AG04449 (cell line): ENCODE measurements at regions of chr17 and their contacts with region 1.

Region 1: GRCh38 chr17:44899069-44899782 is at the start of gene EFTUD2:
- DNase-seq: no peak
- H3K4me3 ChIP-seq: peak within 1 kb of the TSS; percentile 100
- CTCF ChIP-seq: no peak

Region 2: DNA sequence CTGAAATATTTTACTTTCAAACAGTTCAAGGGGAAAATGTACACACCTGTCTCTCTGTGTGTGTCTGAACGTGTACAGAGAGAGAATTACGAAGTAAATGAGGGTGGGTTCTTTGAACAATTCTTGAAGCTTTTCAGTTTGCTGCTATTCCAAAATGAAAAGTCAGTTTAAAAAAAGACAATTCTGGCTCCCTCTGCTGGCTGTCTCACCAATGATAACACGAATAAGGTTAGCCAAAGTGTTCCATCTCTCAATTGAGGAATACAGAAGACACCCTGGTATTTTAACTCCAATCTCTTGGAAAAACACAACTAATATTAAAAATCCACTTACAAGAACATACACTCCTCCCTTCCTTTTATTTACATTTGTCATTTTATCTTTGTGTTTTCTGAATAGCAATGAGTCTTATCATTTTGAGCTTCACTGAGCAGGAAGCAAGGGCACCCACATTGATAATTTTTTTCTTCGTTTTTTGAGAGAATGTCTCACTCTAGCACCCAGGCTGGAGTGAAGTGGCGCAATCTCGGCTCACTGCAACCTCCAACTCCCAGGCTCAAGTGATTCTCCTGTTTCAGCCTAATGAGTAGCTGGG is 20.5 kb before region 1 on chr17:
- CTCF ChIA-PET with region 1: interaction called, 33 read pairs
- POLR2A ChIA-PET with region 1: interaction called, 3 read pairs
- DNase-seq: no peak
- H3K4me3 ChIP-seq: no peak overlapping the region
- CTCF ChIP-seq: peak; percentile 53

Region 3: GRCh38 chr17:44887971-44888954 is 11.0 kb before region 1 on chr17:
- CTCF ChIA-PET with region 1: interaction called, 33 read pairs
- POLR2A ChIA-PET with region 1: no interaction called
- DNase-seq: no peak
- H3K4me3 ChIP-seq: no peak overlapping the region
- CTCF ChIP-seq: no peak

Region 4: GRCh38 chr17:44911133-44912001 is 12.1 kb after region 1 on chr17:
- CTCF ChIA-PET with region 1: interaction called, 41 read pairs
- POLR2A ChIA-PET with region 1: interaction called, 6 read pairs
- DNase-seq: no peak
- H3K4me3 ChIP-seq: no peak overlapping the region
- CTCF ChIP-seq: peak; percentile 62

Region 5: DNA sequence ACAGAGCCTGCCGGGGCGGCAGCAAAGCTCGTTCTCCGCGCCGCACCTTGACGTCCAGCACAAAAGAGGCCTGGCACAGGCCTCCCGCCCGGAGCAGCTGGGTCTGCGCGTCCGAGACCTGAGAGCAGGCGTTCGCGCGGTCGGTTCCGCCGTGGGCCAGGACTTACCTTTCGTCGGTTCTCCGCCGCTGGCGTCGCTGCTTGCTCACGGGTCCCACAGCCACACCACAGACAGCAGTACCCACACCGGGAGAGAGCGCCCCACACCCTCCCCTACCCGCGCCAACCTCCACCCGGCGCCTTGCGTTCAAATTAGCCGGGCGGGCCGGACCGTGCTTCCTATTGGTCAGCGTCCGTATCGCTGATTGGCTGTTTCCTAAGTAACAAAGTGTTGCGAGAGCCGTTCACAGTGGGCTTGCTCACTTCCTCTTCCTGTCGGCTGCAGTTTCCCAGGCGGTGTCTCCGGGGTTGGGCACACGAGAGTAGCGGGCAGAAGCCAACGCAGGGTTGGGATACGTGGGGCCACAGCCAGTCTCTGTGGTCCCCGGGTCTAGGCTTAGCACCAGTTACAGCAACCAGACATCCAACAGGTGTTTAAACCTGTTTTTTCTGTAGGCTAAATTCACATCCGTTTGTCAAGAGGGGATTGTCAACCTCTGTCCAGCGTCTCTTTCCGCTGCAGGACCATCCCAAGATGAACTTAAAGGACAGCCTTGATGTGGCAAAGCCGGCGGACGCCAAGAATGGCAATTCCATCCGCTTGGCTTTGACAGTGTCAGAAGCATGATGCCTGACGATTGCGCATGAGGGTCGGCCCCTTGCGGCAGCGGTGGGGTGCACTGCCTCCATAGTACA is 48.5 kb after region 1 on chr17 and contains the start of gene KIF18B:
- CTCF ChIA-PET with region 1: no interaction called
- POLR2A ChIA-PET with region 1: no interaction called
- DNase-seq: peak; percentile 68
- H3K4me3 ChIP-seq: peak within 1 kb of the TSS; percentile 91
- CTCF ChIP-seq: no peak